Breast epithelium (tissue), 4 donors: ENCODE measurements at regions of chr2 and their contacts with region 1.

Region 1: DNA sequence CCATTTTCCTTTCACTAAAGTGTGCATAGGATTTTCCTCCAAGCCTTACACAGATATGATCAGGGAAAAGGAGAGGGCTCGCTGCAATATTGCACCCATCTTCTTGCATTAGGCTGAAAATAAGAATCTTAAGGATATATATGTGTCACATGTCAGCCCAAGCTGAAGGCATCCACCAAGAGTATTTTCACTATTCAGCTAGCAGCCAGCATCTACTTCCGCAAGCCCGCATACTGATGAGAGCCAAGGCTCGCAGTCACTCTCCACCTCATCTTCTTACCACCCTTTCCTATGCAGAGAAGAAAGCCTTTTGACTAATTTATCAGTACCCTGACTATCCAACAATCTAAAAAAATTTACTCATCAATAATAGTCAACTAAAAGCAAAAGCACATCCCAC is 6.1 kb downstream of the TMEM163 start:
- DNase-seq: no peak
- H3K4me3 ChIP-seq: no peak overlapping the region
- H3K27ac ChIP-seq: no peak overlapping the region
- H3K4me1 ChIP-seq: no peaks in the 10 kb centered on the region
- H3K27me3 ChIP-seq: peaks cover 0 to 14% of the 10 kb centered on the region in 2 donors
- CTCF ChIP-seq: no peak
- POLR2A ChIP-seq: no peak

Region 2: DNA sequence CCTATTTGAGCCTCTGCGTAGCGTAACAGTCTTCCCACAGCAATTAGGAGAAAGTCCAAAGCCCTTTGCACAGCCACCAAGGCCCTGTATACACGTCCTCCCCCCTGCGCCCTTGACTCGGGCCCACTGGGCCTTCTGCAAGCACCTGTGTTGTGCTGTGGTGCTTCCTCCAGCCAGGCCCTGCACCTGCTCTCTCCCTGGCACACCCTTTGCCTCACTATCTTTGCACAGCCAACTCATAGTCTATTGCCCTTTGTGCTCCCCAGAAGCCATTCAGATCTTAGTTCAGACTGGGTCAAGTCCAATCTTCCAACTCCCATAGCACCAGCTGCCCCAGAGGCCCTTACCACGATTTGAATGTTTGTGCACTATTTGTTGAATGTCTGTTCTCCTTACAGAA is 730.5 kb before region 1 on chr2:
- intact Hi-C with region 1: loop called (anchors 5 kb)
- DNase-seq: no peak
- H3K4me3 ChIP-seq: no peak overlapping the region
- H3K27ac ChIP-seq: no peak overlapping the region
- H3K4me1 ChIP-seq: no peaks in the 10 kb centered on the region
- H3K27me3 ChIP-seq: no peaks in the 10 kb centered on the region
- CTCF ChIP-seq: no peak
- POLR2A ChIP-seq: no peak

Region 3: DNA sequence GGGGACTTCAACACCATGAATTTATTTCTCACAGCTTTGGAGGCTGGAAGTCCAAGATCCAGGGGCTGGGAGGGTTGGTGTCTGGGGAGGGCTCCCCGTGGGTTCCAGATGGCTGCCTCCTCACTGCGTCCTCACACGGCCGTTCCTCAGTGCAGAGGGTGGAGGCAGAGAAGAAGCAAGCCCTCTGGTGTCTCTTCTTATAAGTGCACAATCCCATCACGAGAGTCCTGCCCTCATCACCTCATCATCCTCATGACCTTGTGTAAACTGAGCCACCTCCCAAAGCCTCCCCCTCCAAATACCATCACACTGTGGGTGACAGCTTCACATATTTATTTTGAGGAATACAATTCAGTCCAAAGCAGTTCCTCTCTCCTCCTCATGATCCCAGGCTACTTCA is 20.2 kb before region 1 on chr2:
- intact Hi-C with region 1: no loop called
- DNase-seq: no peak
- H3K4me3 ChIP-seq: no peak overlapping the region
- H3K27ac ChIP-seq: no peak overlapping the region
- H3K4me1 ChIP-seq: no peaks in the 10 kb centered on the region
- H3K27me3 ChIP-seq: no peaks in the 10 kb centered on the region
- CTCF ChIP-seq: no peak
- POLR2A ChIP-seq: no peak